GM10248 (cell line): ENCODE measurements at regions of chr3 and their contacts with region 1.

Region 1: DNA sequence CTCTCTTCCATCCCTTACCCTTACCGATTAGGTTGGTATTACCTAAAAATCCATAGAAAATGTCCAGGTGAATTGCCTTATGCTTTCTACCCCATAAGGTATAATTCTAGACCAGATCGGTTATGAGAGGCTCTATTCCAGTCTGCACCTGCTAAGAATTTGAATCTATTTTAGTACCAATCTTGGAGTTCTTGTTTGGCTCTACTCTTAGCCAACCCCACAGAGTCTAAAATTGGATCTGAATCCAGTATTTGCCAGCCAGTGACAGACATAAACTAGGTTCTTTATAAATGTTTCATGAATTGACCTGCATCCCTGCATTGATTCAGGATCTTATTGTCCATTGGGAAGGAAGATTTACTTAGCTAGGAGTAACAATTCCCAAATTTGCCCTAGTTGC is 6.5 kb downstream of the KLHL24 start:
- DNase-seq: no peak
- CTCF ChIP-seq: no peak

Region 2: DNA sequence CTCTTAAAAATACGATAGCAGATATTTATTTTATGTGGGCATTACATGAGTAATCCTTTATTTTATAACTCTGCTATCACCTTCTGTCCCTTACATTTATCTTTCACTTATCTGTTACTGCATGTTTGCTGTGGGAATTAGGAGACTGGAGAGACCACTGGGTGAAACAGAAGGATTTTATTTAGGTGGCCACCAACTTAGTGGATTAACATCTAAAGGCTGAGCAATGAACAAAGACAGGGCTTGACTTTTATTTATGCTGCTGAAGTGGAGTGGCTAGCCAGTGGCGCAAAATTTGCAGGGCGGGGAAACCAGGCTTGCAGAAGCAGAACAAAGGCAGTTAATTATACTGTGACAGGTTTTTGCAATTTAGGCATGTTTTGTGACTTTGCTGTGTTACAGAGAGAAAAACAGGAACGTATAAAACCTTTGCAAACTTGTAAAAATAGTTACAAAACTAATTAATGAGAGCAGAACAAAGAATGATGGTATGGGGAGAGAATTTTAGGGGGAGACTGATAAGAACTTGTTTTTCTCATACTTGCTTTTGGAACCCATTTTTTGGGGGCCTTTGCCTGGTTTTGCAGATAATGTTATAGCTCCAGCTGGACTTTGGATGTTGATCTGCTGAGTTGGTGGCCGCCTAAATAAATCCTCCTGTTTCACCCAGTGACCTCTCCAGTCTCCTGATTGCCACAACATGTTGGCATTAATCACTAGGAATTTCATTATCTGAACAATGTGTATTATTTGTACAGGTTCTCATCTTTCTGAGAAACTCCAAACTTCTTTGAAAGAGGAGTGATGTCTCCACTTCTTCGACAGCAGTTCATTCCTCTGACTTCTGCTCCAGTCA is 11.6 kb after region 1 on chr3:
- CTCF ChIA-PET with region 1: interaction called, 12 read pairs
- POLR2A ChIA-PET with region 1: no interaction called
- DNase-seq: no peak
- CTCF ChIP-seq: no peak

Region 3: GRCh38 chr3:183695569-183696364 is 53.9 kb after region 1 on chr3:
- CTCF ChIA-PET with region 1: no interaction called
- POLR2A ChIA-PET with region 1: interaction called, 15 read pairs
- DNase-seq: no peak
- CTCF ChIP-seq: no peak